Gastrocnemius medialis (tissue), 4 donors: ENCODE measurements at regions of chr21 and their contacts with region 1.

Region 1: DNA sequence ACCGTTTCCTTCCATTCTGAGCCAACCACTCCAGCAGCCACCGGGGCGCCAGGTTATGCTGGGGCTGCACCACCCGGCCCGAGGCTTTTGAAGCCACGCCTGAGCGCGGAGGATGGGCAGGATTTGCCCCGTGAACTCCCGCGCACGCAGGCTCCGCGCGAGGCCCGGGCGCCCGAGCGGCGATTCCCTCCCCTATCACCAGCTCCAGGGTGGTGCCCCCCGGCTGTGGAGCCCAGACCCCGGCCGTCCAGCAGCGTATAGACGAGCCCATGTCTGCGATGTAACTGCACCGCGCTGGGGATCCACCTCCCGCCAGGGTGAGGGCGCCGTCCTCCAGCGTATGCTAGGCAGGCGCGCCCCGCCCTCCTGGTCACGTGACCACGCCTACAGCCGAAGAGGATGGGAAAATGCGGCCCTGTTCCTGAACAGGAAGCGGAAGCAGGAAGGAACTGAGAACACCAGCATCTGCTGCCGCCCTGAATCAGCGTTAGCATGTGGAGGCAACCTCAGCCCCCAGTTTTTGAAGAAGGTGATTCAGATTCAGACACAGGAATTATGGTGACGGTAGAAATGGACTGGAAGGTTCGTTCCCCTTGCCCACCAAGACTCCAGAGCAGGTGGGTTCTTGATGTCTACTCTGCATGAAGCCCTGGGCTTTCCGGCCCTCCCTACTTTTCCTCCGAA is 46.0 kb downstream of the VPS26C start:
- DNase-seq: peak; percentile 87 to 92
- ATAC-seq: peak; percentile 91 to 93
- H3K4me3 ChIP-seq: peak overlapping the region; percentile 76 to 84 (median 81)
- H3K27ac ChIP-seq: peak overlapping the region; percentile 81 to 88 (median 85)
- H3K4me1 ChIP-seq: peaks cover 4% of the 10 kb centered on the region in 2 donors
- H3K27me3 ChIP-seq: no peaks in the 10 kb centered on the region
- CTCF ChIP-seq: peak in 4 of 5 experiments; percentile 37 to 54 (median 42)
- POLR2A ChIP-seq: peak; percentile 37 to 52

Region 2: DNA sequence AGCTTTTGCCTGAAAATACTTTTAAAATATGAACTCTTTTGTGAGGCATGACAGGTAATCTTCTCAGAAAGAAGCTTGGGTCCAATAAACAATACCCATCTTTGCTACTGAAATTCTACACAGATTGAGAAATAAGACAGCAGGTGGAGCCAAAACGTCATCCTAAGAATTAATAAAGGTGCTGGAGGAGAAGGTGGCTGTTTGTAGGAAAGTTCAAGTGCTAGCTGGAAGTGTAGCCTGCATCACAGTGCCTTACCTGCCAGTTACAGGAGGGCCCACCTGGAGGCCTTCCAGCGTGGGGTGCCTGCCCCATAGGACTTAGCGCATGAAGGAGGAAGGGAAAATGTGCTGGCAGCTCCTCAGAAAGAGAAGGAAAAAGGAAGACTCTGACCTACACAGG is 54.4 kb before region 1 on chr21:
- in situ Hi-C with region 1: no loop called
- intact Hi-C with region 1: loop called (anchors 5 kb)
- DNase-seq: peak in 1 of 2 donors; percentile 17
- ATAC-seq: peak in 1 of 2 donors; percentile 31
- H3K4me3 ChIP-seq: no peak overlapping the region
- H3K27ac ChIP-seq: peak overlapping the region in 2 of 4 donors; percentile 33 to 37
- H3K4me1 ChIP-seq: peaks cover 5 to 15% of the 10 kb centered on the region in 2 donors
- H3K27me3 ChIP-seq: no peaks in the 10 kb centered on the region
- CTCF ChIP-seq: peak in 3 of 5 experiments; percentile 13 to 52 (median 38)
- POLR2A ChIP-seq: no peak

Region 3: GRCh38 chr21:37267269-37268184 is 46.4 kb after region 1 on chr21 and contains the start of gene VPS26C:
- in situ Hi-C with region 1: no loop called
- intact Hi-C with region 1: loop called (anchors 2 kb)
- DNase-seq: peak; percentile 97 to 99
- ATAC-seq: peak; percentile 88 to 94
- H3K4me3 ChIP-seq: peak within 1 kb of the TSS; percentile 72 to 90 (median 84)
- H3K27ac ChIP-seq: peak within 1 kb of the TSS; percentile 89 to 97 (median 96)
- H3K4me1 ChIP-seq: peaks cover 37 to 41% of the 10 kb centered on the region in 2 donors
- H3K27me3 ChIP-seq: no peaks in the 10 kb centered on the region
- CTCF ChIP-seq: peak in 1 of 5 experiments; percentile 32
- POLR2A ChIP-seq: peak; percentile 88 to 92
- total RNA-seq, gene VPS26C: 57.6 to 82.7 (median 75.4) TPM

Region 4: DNA sequence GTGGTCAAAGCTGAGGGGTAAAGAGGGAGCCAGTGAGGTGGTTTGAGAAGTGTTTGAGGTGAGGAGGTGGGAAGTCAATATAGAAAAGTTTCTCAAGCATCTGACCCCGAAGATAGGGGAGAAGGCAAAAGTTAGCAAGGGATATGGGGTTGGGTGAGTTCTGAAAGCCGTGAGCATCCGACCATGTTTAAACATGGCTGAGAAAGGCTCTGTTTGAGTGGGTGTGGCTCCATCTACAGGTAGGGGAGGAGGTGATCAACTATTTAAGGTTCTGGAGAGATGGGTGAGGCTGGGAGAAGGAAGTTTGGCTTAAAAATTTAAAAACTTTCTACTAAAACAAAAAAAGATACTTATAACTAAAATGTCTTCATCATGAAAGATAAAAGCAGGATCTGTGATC is 421.4 kb after region 1 on chr21:
- in situ Hi-C with region 1: no loop called
- intact Hi-C with region 1: loop called (anchors 5 kb)
- DNase-seq: no peak
- ATAC-seq: peak; percentile 65 to 86
- H3K4me3 ChIP-seq: no peak overlapping the region
- H3K27ac ChIP-seq: no peak overlapping the region
- H3K4me1 ChIP-seq: peaks cover 0 to 2% of the 10 kb centered on the region in 2 donors
- H3K27me3 ChIP-seq: peaks cover 0 to 6% (median 0%) of the 10 kb centered on the region in 3 donors
- CTCF ChIP-seq: peak in 4 of 5 experiments; percentile 17 to 45 (median 32)
- POLR2A ChIP-seq: no peak